ENCODE measurements at regions of chr1 and their contacts with region 1.

Region 1: GRCh38 chr1:36385410-36386257 is at the start of gene STK40:
- DNase-seq: peak; percentile 95
- ATAC-seq: peak; percentile 90
- H3K4me3 ChIP-seq: peak within 1 kb of the TSS; percentile 85
- H3K27ac ChIP-seq: peak within 1 kb of the TSS; percentile 99
- H3K4me1 ChIP-seq: peaks cover 44% of the 10 kb centered on the region
- H3K27me3 ChIP-seq: no peaks in the 10 kb centered on the region
- CTCF ChIP-seq: no peak
- EP300 ChIP-seq: no peak
- POLR2A ChIP-seq: peak; percentile 50
- RAD21 ChIP-seq: no peak
- polyA plus RNA-seq, gene STK40: 0.27 to 2.1 TPM

Region 2: GRCh38 chr1:36350659-36351226 is 34.9 kb before region 1 on chr1:
- CTCF ChIA-PET with region 1: interaction called, 6 read pairs
- POLR2A ChIA-PET with region 1: interaction called, 7 read pairs
- RAD21 ChIA-PET with region 1: interaction called, 11 read pairs
- SMC1A ChIA-PET with region 1: interaction called, 7 read pairs
- in situ Hi-C with region 1: no loop called
- intact Hi-C with region 1: no loop called
- DNase-seq: no peak
- ATAC-seq: peak; percentile 49
- H3K4me3 ChIP-seq: no peak overlapping the region
- H3K27ac ChIP-seq: peak overlapping the region; percentile 79
- H3K4me1 ChIP-seq: peaks cover 37% of the 10 kb centered on the region
- H3K27me3 ChIP-seq: no peaks in the 10 kb centered on the region
- CTCF ChIP-seq: no peak
- EP300 ChIP-seq: no peak
- POLR2A ChIP-seq: no peak
- RAD21 ChIP-seq: no peak

Region 3: DNA sequence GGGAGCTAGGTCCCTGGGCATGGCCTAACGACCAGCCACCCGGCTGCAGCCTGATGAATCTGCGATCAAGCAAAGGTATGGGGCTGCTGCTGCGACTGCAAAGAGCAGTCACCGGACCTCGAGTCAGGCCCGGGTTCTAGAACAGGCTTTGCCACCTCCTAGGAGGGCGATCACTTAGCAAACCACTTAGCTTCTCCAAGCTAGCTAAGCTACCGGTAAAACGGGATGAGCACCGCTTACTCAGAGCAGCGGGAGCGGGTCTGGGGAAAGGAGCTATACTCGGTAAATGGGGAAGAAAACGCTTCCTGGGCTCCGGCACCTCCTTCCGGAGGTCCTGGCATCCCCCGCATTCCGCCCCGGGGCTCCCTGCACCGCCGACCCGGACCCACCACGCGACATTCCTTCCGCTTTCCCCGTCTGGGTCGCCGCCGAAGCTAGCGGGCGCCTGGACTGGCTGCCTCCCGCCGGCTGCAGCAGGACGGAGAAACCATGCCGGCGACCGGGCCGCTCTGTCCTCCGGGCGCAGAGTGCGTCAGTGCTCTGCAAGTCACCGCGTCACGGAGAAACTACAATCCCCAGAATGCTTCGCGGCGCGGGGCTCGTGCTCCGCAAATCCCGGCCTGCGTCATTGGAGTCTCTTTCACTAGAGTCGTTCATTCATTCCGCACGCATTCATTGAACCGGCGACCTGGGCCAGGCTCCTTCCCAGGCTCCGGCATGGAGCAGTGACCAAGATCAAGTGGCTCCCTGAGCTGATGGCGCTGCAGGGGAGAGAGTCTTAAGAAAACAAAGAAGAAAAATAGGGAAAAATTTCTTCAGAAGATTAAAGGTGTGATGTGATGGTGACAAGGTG is 12.0 kb after region 1 on chr1 and contains the start of gene LSM10:
- CTCF ChIA-PET with region 1: interaction called, 25 read pairs
- POLR2A ChIA-PET with region 1: interaction called, 79 read pairs
- RAD21 ChIA-PET with region 1: interaction called, 20 read pairs
- SMC1A ChIA-PET with region 1: interaction called, 36 read pairs
- in situ Hi-C with region 1: no loop called
- intact Hi-C with region 1: no loop called
- DNase-seq: peak; percentile 70
- ATAC-seq: peak; percentile 95
- H3K4me3 ChIP-seq: peak within 1 kb of the TSS; percentile 94
- H3K27ac ChIP-seq: peak within 1 kb of the TSS; percentile 77
- H3K4me1 ChIP-seq: peaks cover 13% of the 10 kb centered on the region
- H3K27me3 ChIP-seq: no peaks in the 10 kb centered on the region
- CTCF ChIP-seq: no peak
- EP300 ChIP-seq: no peak
- POLR2A ChIP-seq: peak; percentile 92
- RAD21 ChIP-seq: no peak
- polyA plus RNA-seq, gene LSM10: 26.6 to 36.0 TPM